ENCODE measurements at regions of chr15 and their contacts with region 1.

Region 1: GRCh38 chr15:97960364-97961066 is at the start of gene ARRDC4:
- DNase-seq: peak; percentile 85 to 100 (median 100)
- ATAC-seq: peak; percentile 97
- H3K4me3 ChIP-seq: peak within 1 kb of the TSS; percentile 45
- H3K4me3 Mint-ChIP-seq: peak within 1 kb of the TSS; percentile 78 to 93 (median 86)
- H3K27ac ChIP-seq: peak within 1 kb of the TSS; percentile 79
- H3K27ac Mint-ChIP-seq: peak within 1 kb of the TSS; percentile 71 to 98 (median 88)
- H3K4me1 ChIP-seq: peaks cover 0 to 13% of the 10 kb centered on the region in 2 donors
- H3K4me1 Mint-ChIP-seq: peaks cover 14 to 41% (median 21%) of the 10 kb centered on the region in 7 donors
- H3K27me3 ChIP-seq: no peaks in the 10 kb centered on the region
- H3K27me3 Mint-ChIP-seq: peaks cover 0 to 40% (median 0%) of the 10 kb centered on the region in 5 donors
- total RNA-seq, gene ARRDC4: 0.59 to 6.8 (median 1.1) TPM

Region 2: DNA sequence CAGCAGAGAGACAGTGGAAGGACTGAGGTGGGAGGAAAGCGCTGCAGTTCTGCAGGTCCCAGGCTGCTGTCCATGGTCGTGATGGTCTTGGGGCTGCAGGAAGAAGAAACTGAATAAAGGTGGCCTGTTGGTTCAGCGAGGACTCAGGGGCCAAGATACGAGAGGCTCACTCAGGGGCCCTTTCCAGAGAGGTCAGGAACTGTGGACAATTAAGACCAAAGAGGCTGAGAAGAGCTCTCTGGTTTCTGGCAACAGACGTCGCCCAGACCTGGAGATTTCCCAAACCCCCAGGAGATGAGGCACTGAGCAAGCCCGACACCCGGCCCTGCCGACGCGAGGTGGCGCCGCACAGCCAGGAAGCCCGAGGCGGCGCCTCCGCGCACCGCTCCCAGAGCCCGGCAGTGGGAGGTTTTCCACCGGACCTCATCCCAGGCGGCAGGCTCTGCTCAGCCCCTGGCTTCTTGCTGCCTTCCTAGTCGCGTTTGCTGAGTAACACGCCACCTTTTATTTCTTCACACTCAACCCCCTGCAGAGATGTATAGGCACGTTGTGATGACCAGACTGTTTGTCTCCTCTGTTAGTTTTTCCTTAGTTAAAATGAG is 56.4 kb before region 1 on chr15:
- CTCF ChIA-PET with region 1: no interaction called
- POLR2A ChIA-PET with region 1: no interaction called
- intact Hi-C with region 1: no loop called
- DNase-seq: peak in 3 of 9 donors; percentile 2 to 41 (median 7)
- ATAC-seq: peak; percentile 40
- H3K4me3 ChIP-seq: no peak overlapping the region
- H3K4me3 Mint-ChIP-seq: no peak overlapping the region
- H3K27ac ChIP-seq: no peak overlapping the region
- H3K27ac Mint-ChIP-seq: no peak overlapping the region
- H3K4me1 ChIP-seq: no peaks in the 10 kb centered on the region
- H3K4me1 Mint-ChIP-seq: peaks cover 0 to 5% (median 3%) of the 10 kb centered on the region in 7 donors
- H3K27me3 ChIP-seq: no peaks in the 10 kb centered on the region
- H3K27me3 Mint-ChIP-seq: peaks cover 26 to 55% (median 42%) of the 10 kb centered on the region in 5 donors

Region 3: GRCh38 chr15:98160236-98160635 is 199.7 kb after region 1 on chr15:
- CTCF ChIA-PET with region 1: no interaction called
- POLR2A ChIA-PET with region 1: no interaction called
- intact Hi-C with region 1: loop called in 1 of 2 experiments (anchors 1 kb)
- DNase-seq: peak in 7 of 9 donors; percentile 25 to 62 (median 48)
- ATAC-seq: peak; percentile 89
- H3K4me3 ChIP-seq: no peak overlapping the region
- H3K4me3 Mint-ChIP-seq: peak overlapping the region; percentile 31 to 71 (median 54)
- H3K27ac ChIP-seq: no peak overlapping the region
- H3K27ac Mint-ChIP-seq: peak overlapping the region in 5 of 9 donors; percentile 14 to 82 (median 69)
- H3K4me1 ChIP-seq: peaks cover 0 to 18% of the 10 kb centered on the region in 2 donors
- H3K4me1 Mint-ChIP-seq: peaks cover 17 to 40% (median 26%) of the 10 kb centered on the region in 7 donors
- H3K27me3 ChIP-seq: no peaks in the 10 kb centered on the region
- H3K27me3 Mint-ChIP-seq: peaks cover 0 to 31% (median 2%) of the 10 kb centered on the region in 5 donors

Region 4: GRCh38 chr15:99250494-99251435 is 1290.2 kb after region 1 on chr15:
- CTCF ChIA-PET with region 1: no interaction called
- POLR2A ChIA-PET with region 1: no interaction called
- intact Hi-C with region 1: loop called in 1 of 2 experiments (anchors 5 kb)
- DNase-seq: peak; percentile 78 to 95 (median 92)
- ATAC-seq: peak; percentile 96
- H3K4me3 ChIP-seq: peak overlapping the region; percentile 76
- H3K4me3 Mint-ChIP-seq: peak overlapping the region in 8 of 10 donors; percentile 81 to 95 (median 92)
- H3K27ac ChIP-seq: peak overlapping the region; percentile 65
- H3K27ac Mint-ChIP-seq: peak overlapping the region; percentile 83 to 92 (median 90)
- H3K4me1 ChIP-seq: peaks cover 14 to 28% of the 10 kb centered on the region in 2 donors
- H3K4me1 Mint-ChIP-seq: peaks cover 24 to 32% (median 27%) of the 10 kb centered on the region in 7 donors
- H3K27me3 ChIP-seq: no peaks in the 10 kb centered on the region
- H3K27me3 Mint-ChIP-seq: no peaks in the 10 kb centered on the region

Measured in naive thymus-derived CD4-positive, alpha-beta T cell (primary cell).